Gastrocnemius medialis (tissue), 4 donors: ENCODE measurements at regions of chr13 and their contacts with region 1.

Region 1: GRCh38 chr13:72536714-72537394 is 190.6 kb downstream of the MZT1 start:
- DNase-seq: no peak
- ATAC-seq: no peak
- H3K4me3 ChIP-seq: no peak overlapping the region
- H3K27ac ChIP-seq: no peak overlapping the region
- H3K4me1 ChIP-seq: no peaks in the 10 kb centered on the region
- H3K27me3 ChIP-seq: no peaks in the 10 kb centered on the region
- CTCF ChIP-seq: no peak
- POLR2A ChIP-seq: no peak

Region 2: DNA sequence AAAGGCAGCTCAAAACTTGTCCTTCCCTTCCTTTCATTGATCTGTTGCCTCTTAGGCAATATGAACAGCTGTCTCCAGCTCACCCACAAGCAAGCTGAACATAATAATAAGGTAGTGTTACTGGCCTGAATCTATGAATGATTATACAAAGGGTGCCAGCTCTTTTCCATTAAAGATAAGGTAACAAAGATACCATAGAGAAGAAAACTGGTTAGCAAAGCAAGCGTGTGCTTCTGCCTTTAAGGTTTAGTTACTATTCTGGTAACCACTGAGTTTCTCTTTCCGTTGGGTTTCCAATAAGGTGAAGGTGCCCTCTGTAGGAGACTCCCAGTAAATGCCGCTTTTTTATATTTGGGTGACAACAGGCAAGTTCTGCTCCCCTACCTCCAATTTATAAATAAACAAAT is 657.7 kb before region 1 on chr13:
- in situ Hi-C with region 1: no loop called
- intact Hi-C with region 1: no loop called
- DNase-seq: no peak
- ATAC-seq: peak in 1 of 2 donors; percentile 52
- H3K4me3 ChIP-seq: peak overlapping the region in 1 of 4 donors; percentile 15
- H3K27ac ChIP-seq: peak overlapping the region in 1 of 4 donors; percentile 28
- H3K4me1 ChIP-seq: peaks cover 0 to 5% of the 10 kb centered on the region in 2 donors
- H3K27me3 ChIP-seq: no peaks in the 10 kb centered on the region
- CTCF ChIP-seq: peak in 4 of 5 experiments; percentile 17 to 53 (median 32)
- POLR2A ChIP-seq: no peak

Region 3: DNA sequence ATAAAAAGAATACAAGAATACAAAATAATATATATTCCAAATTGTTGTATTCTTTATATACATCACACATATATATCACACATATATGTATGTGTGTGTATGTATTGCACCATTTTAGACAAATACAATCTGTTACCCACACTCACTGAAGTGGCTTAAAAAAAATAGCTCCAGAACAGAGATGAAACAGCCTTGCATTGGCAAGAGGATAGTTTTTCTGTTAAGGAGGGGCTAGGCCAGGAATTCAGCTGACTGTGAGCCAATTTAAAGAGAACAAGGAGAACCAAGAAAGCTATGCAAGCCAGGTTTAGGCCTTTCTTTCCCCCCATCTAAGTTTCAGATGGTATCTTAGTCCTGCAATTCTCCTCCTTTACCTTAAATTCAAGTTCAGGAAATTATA is 66.9 kb before region 1 on chr13:
- in situ Hi-C with region 1: loop called in 1 of 4 experiments (anchors 10 kb)
- intact Hi-C with region 1: no loop called
- DNase-seq: no peak
- ATAC-seq: no peak
- H3K4me3 ChIP-seq: no peak overlapping the region
- H3K27ac ChIP-seq: no peak overlapping the region
- H3K4me1 ChIP-seq: no peaks in the 10 kb centered on the region
- H3K27me3 ChIP-seq: no peaks in the 10 kb centered on the region
- CTCF ChIP-seq: no peak
- POLR2A ChIP-seq: no peak